ENCODE measurements at regions of chr10 and their contacts with region 1.

Region 1: GRCh38 chr10:17643755-17644484 is at the start of gene STAM:
- DNase-seq: peak; percentile 87 to 96 (median 93)
- ATAC-seq: peak; percentile 86
- H3K4me3 ChIP-seq: peak within 1 kb of the TSS; percentile 84 to 85
- H3K4me3 Mint-ChIP-seq: peak within 1 kb of the TSS; percentile 99
- H3K27ac ChIP-seq: peak within 1 kb of the TSS; percentile 88 to 97
- H3K27ac Mint-ChIP-seq: peak within 1 kb of the TSS; percentile 100
- H3K4me1 ChIP-seq: peaks cover 40% of the 10 kb centered on the region
- H3K4me1 Mint-ChIP-seq: peaks cover 57% of the 10 kb centered on the region
- H3K27me3 ChIP-seq: no peaks in the 10 kb centered on the region
- H3K27me3 Mint-ChIP-seq: no peaks in the 10 kb centered on the region
- CTCF ChIP-seq: no peak
- total RNA-seq, gene STAM: 44.0 to 47.9 TPM

Region 2: DNA sequence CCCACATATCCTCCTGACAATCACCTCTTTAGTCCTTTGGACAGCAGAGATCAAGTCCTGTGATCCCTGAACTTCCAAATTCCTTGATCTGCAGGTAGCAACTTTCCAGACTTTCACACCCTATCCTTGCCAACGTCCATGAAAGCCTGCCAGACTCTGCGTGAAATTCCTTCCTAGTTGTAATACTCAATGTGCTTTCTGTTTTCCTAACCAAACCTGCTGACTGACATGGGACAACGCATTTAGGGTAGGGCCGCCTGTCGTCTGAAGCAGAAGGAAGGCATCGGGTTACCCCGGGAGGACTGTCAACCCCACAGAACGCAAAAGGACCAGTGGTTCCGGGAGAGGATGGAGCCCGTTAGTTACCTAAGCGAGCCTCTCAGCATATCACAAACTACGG is 1948.1 kb before region 1 on chr10:
- CTCF ChIA-PET with region 1: no interaction called
- POLR2A ChIA-PET with region 1: no interaction called
- intact Hi-C with region 1: no loop called
- DNase-seq: no peak
- ATAC-seq: no peak
- H3K4me3 ChIP-seq: no peak overlapping the region
- H3K4me3 Mint-ChIP-seq: no peak overlapping the region
- H3K27ac ChIP-seq: no peak overlapping the region
- H3K27ac Mint-ChIP-seq: no peak overlapping the region
- H3K4me1 ChIP-seq: no peaks in the 10 kb centered on the region
- H3K4me1 Mint-ChIP-seq: no peaks in the 10 kb centered on the region
- H3K27me3 ChIP-seq: peaks cover 0 to 2% of the 10 kb centered on the region in 2 experiments
- H3K27me3 Mint-ChIP-seq: peaks cover 5% of the 10 kb centered on the region
- CTCF ChIP-seq: no peak

Region 3: GRCh38 chr10:15859906-15860691 is 1783.8 kb before region 1 on chr10 and contains the start of gene MINDY3:
- CTCF ChIA-PET with region 1: no interaction called
- POLR2A ChIA-PET with region 1: no interaction called
- intact Hi-C with region 1: loop called in 1 of 2 experiments (anchors 10 kb)
- DNase-seq: peak; percentile 70 to 93 (median 85)
- ATAC-seq: peak; percentile 89
- H3K4me3 ChIP-seq: peak within 1 kb of the TSS; percentile 91 to 96
- H3K4me3 Mint-ChIP-seq: peak within 1 kb of the TSS; percentile 100
- H3K27ac ChIP-seq: peak within 1 kb of the TSS; percentile 62 to 63
- H3K27ac Mint-ChIP-seq: peak within 1 kb of the TSS; percentile 96
- H3K4me1 ChIP-seq: peaks cover 23% of the 10 kb centered on the region
- H3K4me1 Mint-ChIP-seq: peaks cover 43% of the 10 kb centered on the region
- H3K27me3 ChIP-seq: peaks cover 0 to 2% of the 10 kb centered on the region in 2 experiments
- H3K27me3 Mint-ChIP-seq: peaks cover 13% of the 10 kb centered on the region
- CTCF ChIP-seq: no peak
- total RNA-seq, gene MINDY3: 34.0 to 34.6 TPM

Region 4: GRCh38 chr10:17023386-17024298 is 620.3 kb before region 1 on chr10:
- CTCF ChIA-PET with region 1: no interaction called
- POLR2A ChIA-PET with region 1: no interaction called
- intact Hi-C with region 1: loop called in 1 of 2 experiments (anchors 10 kb)
- DNase-seq: peak; percentile 48 to 96 (median 72)
- ATAC-seq: peak; percentile 67
- H3K4me3 ChIP-seq: peak overlapping the region; percentile 16 to 44
- H3K4me3 Mint-ChIP-seq: peak overlapping the region; percentile 53
- H3K27ac ChIP-seq: peak overlapping the region; percentile 78 to 91
- H3K27ac Mint-ChIP-seq: peak overlapping the region; percentile 95
- H3K4me1 ChIP-seq: peaks cover 68% of the 10 kb centered on the region
- H3K4me1 Mint-ChIP-seq: peaks cover 65% of the 10 kb centered on the region
- H3K27me3 ChIP-seq: no peaks in the 10 kb centered on the region
- H3K27me3 Mint-ChIP-seq: no peaks in the 10 kb centered on the region
- CTCF ChIP-seq: no peak

Region 5: GRCh38 chr10:17617031-17617911 is 26.6 kb before region 1 on chr10 and contains the start of gene HACD1:
- CTCF ChIA-PET with region 1: interaction called, 6 read pairs
- POLR2A ChIA-PET with region 1: interaction called, 5 read pairs
- intact Hi-C with region 1: loop called in 1 of 2 experiments (anchors 1 kb)
- DNase-seq: peak in 8 of 9 experiments; percentile 10 to 62 (median 42)
- ATAC-seq: peak; percentile 74
- H3K4me3 ChIP-seq: peak within 1 kb of the TSS; percentile 58 to 68
- H3K4me3 Mint-ChIP-seq: peak within 1 kb of the TSS; percentile 90
- H3K27ac ChIP-seq: no peak within 1 kb of the TSS
- H3K27ac Mint-ChIP-seq: no peak within 1 kb of the TSS
- H3K4me1 ChIP-seq: peaks cover 7% of the 10 kb centered on the region
- H3K4me1 Mint-ChIP-seq: peaks cover 5% of the 10 kb centered on the region
- H3K27me3 ChIP-seq: peaks cover 0 to 6% of the 10 kb centered on the region in 2 experiments
- H3K27me3 Mint-ChIP-seq: peaks cover 15% of the 10 kb centered on the region
- CTCF ChIP-seq: no peak
- total RNA-seq, gene HACD1: not detected

Region 6: DNA sequence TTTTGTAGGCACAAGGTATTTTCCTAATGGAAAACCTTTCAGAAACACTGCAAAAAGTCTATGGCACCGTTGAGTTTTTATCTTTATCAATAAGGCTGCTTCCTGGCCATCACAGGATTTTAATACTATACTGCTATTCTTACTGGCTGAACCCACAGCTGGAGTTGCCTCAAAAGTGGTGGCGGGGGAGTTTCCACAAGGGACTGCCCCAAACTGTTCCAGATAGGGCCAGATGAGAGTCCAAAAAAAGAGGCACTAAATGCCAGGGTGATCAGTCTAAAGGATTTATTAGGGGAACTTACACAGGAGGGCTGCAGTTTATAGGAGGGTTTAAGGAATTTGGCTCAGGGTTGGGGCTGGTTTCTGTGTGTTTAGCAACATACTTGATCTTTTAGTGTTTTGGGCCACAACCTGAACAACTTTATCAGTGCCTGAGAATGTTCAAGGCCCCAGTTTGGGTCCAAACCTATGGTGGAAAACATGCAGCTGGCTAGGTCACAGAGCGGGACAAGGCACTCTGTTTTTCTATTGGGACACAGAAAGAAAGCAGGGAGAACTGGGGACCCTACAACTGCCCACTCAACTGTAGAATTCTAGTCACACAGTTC is 41.4 kb after region 1 on chr10:
- CTCF ChIA-PET with region 1: interaction called, 3 read pairs
- POLR2A ChIA-PET with region 1: no interaction called
- intact Hi-C with region 1: loop called (anchors 5 kb)
- DNase-seq: peak in 2 of 9 experiments; percentile 24 to 44
- ATAC-seq: no peak
- H3K4me3 ChIP-seq: no peak overlapping the region
- H3K4me3 Mint-ChIP-seq: no peak overlapping the region
- H3K27ac ChIP-seq: no peak overlapping the region
- H3K27ac Mint-ChIP-seq: peak overlapping the region; percentile 28
- H3K4me1 ChIP-seq: peaks cover 3% of the 10 kb centered on the region
- H3K4me1 Mint-ChIP-seq: peaks cover 39% of the 10 kb centered on the region
- H3K27me3 ChIP-seq: no peaks in the 10 kb centered on the region
- H3K27me3 Mint-ChIP-seq: no peaks in the 10 kb centered on the region
- CTCF ChIP-seq: no peak

Region 7: GRCh38 chr10:18659120-18659818 is 1015.3 kb after region 1 on chr10 and contains the start of gene ARL5B:
- CTCF ChIA-PET with region 1: no interaction called
- POLR2A ChIA-PET with region 1: no interaction called
- intact Hi-C with region 1: loop called (anchors 2 to 10 kb)
- DNase-seq: peak; percentile 94 to 99 (median 96)
- ATAC-seq: peak; percentile 96
- H3K4me3 ChIP-seq: peak within 1 kb of the TSS; percentile 74 to 98
- H3K4me3 Mint-ChIP-seq: peak within 1 kb of the TSS; percentile 100
- H3K27ac ChIP-seq: peak within 1 kb of the TSS; percentile 90 to 92
- H3K27ac Mint-ChIP-seq: peak within 1 kb of the TSS; percentile 99
- H3K4me1 ChIP-seq: peaks cover 28% of the 10 kb centered on the region
- H3K4me1 Mint-ChIP-seq: peaks cover 55% of the 10 kb centered on the region
- H3K27me3 ChIP-seq: no peaks in the 10 kb centered on the region
- H3K27me3 Mint-ChIP-seq: no peaks in the 10 kb centered on the region
- CTCF ChIP-seq: no peak
- total RNA-seq, gene ARL5B: 12.2 to 12.4 TPM